Activated CD8-positive, alpha-beta memory T cell treated with anti-CD3 and anti-CD28 coated beads, Interleukin-2, amount 10 ng/mL, durations not matched to agents 7 days and 5 days (primary cell): ENCODE measurements at regions of chr10 and their contacts with region 1.

Region 1: GRCh38 chr10:27252267-27253000 is 11.8 kb upstream of the ACBD5 start:
- DNase-seq: peak; percentile 86
- ATAC-seq: peak; percentile 98
- H3K4me3 Mint-ChIP-seq: peak overlapping the region; percentile 76
- H3K27ac Mint-ChIP-seq: peak overlapping the region; percentile 87
- H3K4me1 Mint-ChIP-seq: peaks cover 16% of the 10 kb centered on the region
- H3K27me3 Mint-ChIP-seq: peaks cover 5% of the 10 kb centered on the region

Region 2: GRCh38 chr10:27241652-27242472 is 10.6 kb before region 1 on chr10:
- CTCF ChIA-PET with region 1: interaction called, 28 read pairs
- DNase-seq: peak; percentile 93
- ATAC-seq: peak; percentile 65
- H3K4me3 Mint-ChIP-seq: peak overlapping the region; percentile 97
- H3K27ac Mint-ChIP-seq: peak overlapping the region; percentile 97
- H3K4me1 Mint-ChIP-seq: peaks cover 24% of the 10 kb centered on the region
- H3K27me3 Mint-ChIP-seq: no peaks in the 10 kb centered on the region

Region 3: GRCh38 chr10:27529010-27529783 is 276.8 kb after region 1 on chr10:
- CTCF ChIA-PET with region 1: no interaction called
- DNase-seq: no peak
- ATAC-seq: no peak
- H3K4me3 Mint-ChIP-seq: no peak overlapping the region
- H3K27ac Mint-ChIP-seq: no peak overlapping the region
- H3K4me1 Mint-ChIP-seq: peaks cover 38% of the 10 kb centered on the region
- H3K27me3 Mint-ChIP-seq: no peaks in the 10 kb centered on the region

Region 4: GRCh38 chr10:27547482-27547881 is 295.0 kb after region 1 on chr10:
- CTCF ChIA-PET with region 1: no interaction called
- DNase-seq: no peak
- ATAC-seq: no peak
- H3K4me3 Mint-ChIP-seq: no peak overlapping the region
- H3K27ac Mint-ChIP-seq: no peak overlapping the region
- H3K4me1 Mint-ChIP-seq: peaks cover 6% of the 10 kb centered on the region
- H3K27me3 Mint-ChIP-seq: no peaks in the 10 kb centered on the region